ENCODE measurements at regions of chr16 and their contacts with region 1.

Region 1: DNA sequence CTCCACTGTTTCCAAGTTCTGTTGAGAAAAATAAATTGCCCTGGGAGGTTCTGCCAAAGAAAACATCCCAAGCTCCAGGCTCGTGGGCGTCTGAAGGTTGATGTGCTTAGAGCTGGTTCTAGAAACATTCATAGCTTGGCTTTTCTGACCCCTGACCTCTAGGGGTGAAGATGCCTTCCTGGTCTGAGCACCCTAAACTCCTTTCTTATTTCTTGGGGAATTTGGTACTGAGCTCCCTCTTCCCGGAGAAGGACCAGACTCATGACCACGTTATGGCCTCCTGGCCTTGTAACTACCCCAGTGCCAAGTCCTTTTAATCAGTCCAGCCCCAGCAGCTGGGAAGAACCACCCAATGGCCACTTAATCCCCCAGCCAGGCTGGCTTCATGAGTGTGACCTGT is 66.4 kb downstream of the MYH11 start:
- DNase-seq: no peak
- H3K4me3 ChIP-seq: no peak overlapping the region
- H3K27ac ChIP-seq: no peak overlapping the region
- H3K4me1 ChIP-seq: no peaks in the 10 kb centered on the region
- H3K27me3 ChIP-seq: no peaks in the 10 kb centered on the region
- CTCF ChIP-seq: no peak

Region 2: DNA sequence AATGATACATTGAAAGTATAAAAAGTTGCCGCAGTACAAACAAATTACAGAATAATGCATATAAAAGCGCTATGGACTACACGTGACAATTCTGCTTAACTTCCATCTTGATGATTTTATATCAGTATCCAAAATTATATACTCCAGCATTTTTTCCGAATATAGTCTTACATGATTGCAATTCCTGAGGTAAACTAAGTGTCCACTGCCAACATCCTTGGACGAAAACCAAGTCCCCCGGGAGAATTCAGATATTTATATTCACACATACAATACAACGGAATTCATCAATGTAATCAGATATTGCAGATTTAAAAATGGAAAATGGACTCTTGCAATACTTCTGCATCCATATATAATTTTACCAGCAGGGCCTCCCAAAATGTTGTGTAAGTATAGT is 75.3 kb after region 1 on chr16:
- CTCF ChIA-PET with region 1: no interaction called
- dilution Hi-C with region 1: no loop called
- in situ Hi-C with region 1: loop called in 1 of 2 experiments (anchors 10 kb)
- intact Hi-C with region 1: no loop called
- DNase-seq: no peak
- H3K4me3 ChIP-seq: no peak overlapping the region
- H3K27ac ChIP-seq: no peak overlapping the region
- H3K4me1 ChIP-seq: peaks cover 16% of the 10 kb centered on the region
- H3K27me3 ChIP-seq: no peaks in the 10 kb centered on the region
- CTCF ChIP-seq: no peak

Region 3: GRCh38 chr16:16797239-16797638 is 1006.8 kb after region 1 on chr16:
- CTCF ChIA-PET with region 1: no interaction called
- dilution Hi-C with region 1: no loop called
- in situ Hi-C with region 1: no loop called
- intact Hi-C with region 1: no loop called
- DNase-seq: no peak
- H3K4me3 ChIP-seq: no peak overlapping the region
- H3K27ac ChIP-seq: no peak overlapping the region
- H3K4me1 ChIP-seq: no peaks in the 10 kb centered on the region
- H3K27me3 ChIP-seq: no peaks in the 10 kb centered on the region
- CTCF ChIP-seq: no peak

Measured in mammary epithelial cell (primary cell).